Endothelial cell of umbilical vein (primary cell): ENCODE measurements at regions of chr15 and their contacts with region 1.

Region 1: GRCh38 chr15:79853458-79854328 is 43.1 kb downstream of the MTHFS start:
- DNase-seq: peak; percentile 88
- H3K4me3 ChIP-seq: no peak overlapping the region
- H3K27ac ChIP-seq: no peak overlapping the region
- H3K4me1 ChIP-seq: no peaks in the 10 kb centered on the region
- H3K27me3 ChIP-seq: no peaks in the 10 kb centered on the region
- CTCF ChIP-seq: peak; percentile 93 to 95
- POLR2A ChIP-seq: no peak

Region 2: GRCh38 chr15:79310983-79311900 is 542.5 kb before region 1 on chr15 and contains the start of gene TMED3:
- CTCF ChIA-PET with region 1: interaction called, 11 read pairs
- POLR2A ChIA-PET with region 1: no interaction called
- dilution Hi-C with region 1: no loop called
- intact Hi-C with region 1: no loop called
- DNase-seq: peak; percentile 85
- H3K4me3 ChIP-seq: peak within 1 kb of the TSS; percentile 61 to 74 (median 65)
- H3K27ac ChIP-seq: peak within 1 kb of the TSS; percentile 22
- H3K4me1 ChIP-seq: peaks cover 16% of the 10 kb centered on the region
- H3K27me3 ChIP-seq: peaks cover 13 to 28% of the 10 kb centered on the region in 2 experiments
- CTCF ChIP-seq: peak; percentile 18 to 35
- POLR2A ChIP-seq: peak; percentile 77
- total RNA-seq, gene TMED3: 105 and 114 TPM in 2 replicates

Region 3: GRCh38 chr15:79380755-79381497 is 472.8 kb before region 1 on chr15:
- CTCF ChIA-PET with region 1: interaction called, 535 read pairs
- POLR2A ChIA-PET with region 1: no interaction called
- dilution Hi-C with region 1: no loop called
- intact Hi-C with region 1: loop called (anchors 1 kb)
- DNase-seq: peak; percentile 77
- H3K4me3 ChIP-seq: no peak overlapping the region
- H3K27ac ChIP-seq: no peak overlapping the region
- H3K4me1 ChIP-seq: no peaks in the 10 kb centered on the region
- H3K27me3 ChIP-seq: no peaks in the 10 kb centered on the region
- CTCF ChIP-seq: peak; percentile 81 to 87
- POLR2A ChIP-seq: no peak

Region 4: GRCh38 chr15:79450648-79451047 is 403.0 kb before region 1 on chr15:
- CTCF ChIA-PET with region 1: interaction called, 18 read pairs
- POLR2A ChIA-PET with region 1: no interaction called
- dilution Hi-C with region 1: no loop called
- intact Hi-C with region 1: no loop called
- DNase-seq: no peak
- H3K4me3 ChIP-seq: no peak overlapping the region
- H3K27ac ChIP-seq: no peak overlapping the region
- H3K4me1 ChIP-seq: no peaks in the 10 kb centered on the region
- H3K27me3 ChIP-seq: peaks cover 0 to 2% of the 10 kb centered on the region in 2 experiments
- CTCF ChIP-seq: no peak
- POLR2A ChIP-seq: no peak

Region 5: DNA sequence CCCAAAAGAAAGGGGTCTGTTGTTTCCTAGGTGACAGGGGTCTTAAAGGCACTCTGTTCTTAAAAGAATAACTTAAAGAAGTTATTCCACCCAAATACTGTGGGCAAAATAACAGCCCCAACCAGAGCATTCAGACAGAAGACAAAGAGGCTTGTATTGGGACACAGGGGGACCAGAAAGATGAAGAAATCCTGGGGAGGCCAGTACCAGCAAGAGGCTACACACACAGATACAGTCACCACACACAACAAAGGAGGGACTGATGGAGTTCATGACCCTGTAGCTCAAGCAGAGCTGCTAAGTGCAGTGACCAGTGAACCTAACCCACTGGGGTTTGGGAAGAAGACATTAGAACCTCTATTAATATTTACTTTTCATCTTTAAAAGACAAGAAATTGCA is 15.8 kb before region 1 on chr15:
- CTCF ChIA-PET with region 1: interaction called, 16 read pairs
- POLR2A ChIA-PET with region 1: no interaction called
- dilution Hi-C with region 1: no loop called
- intact Hi-C with region 1: no loop called
- DNase-seq: no peak
- H3K4me3 ChIP-seq: no peak overlapping the region
- H3K27ac ChIP-seq: no peak overlapping the region
- H3K4me1 ChIP-seq: no peaks in the 10 kb centered on the region
- H3K27me3 ChIP-seq: no peaks in the 10 kb centered on the region
- CTCF ChIP-seq: no peak
- POLR2A ChIP-seq: no peak

Region 6: GRCh38 chr15:79896637-79897379 is 43.1 kb after region 1 on chr15 and contains the start of gene MTHFS:
- CTCF ChIA-PET with region 1: interaction called, 9 read pairs
- POLR2A ChIA-PET with region 1: no interaction called
- dilution Hi-C with region 1: no loop called
- intact Hi-C with region 1: loop called (anchors 2 kb)
- DNase-seq: peak; percentile 73
- H3K4me3 ChIP-seq: peak within 1 kb of the TSS in 2 of 3 experiments; percentile 53 to 77
- H3K27ac ChIP-seq: peak within 1 kb of the TSS; percentile 46
- H3K4me1 ChIP-seq: peaks cover 8% of the 10 kb centered on the region
- H3K27me3 ChIP-seq: no peaks in the 10 kb centered on the region
- CTCF ChIP-seq: peak; percentile 42 to 65
- POLR2A ChIP-seq: peak; percentile 66
- total RNA-seq, gene MTHFS: 9.9 and 15.7 TPM in 2 replicates

Region 7: GRCh38 chr15:80173022-80173759 is 319.5 kb after region 1 on chr15:
- CTCF ChIA-PET with region 1: interaction called, 10 read pairs
- POLR2A ChIA-PET with region 1: no interaction called
- dilution Hi-C with region 1: no loop called
- intact Hi-C with region 1: loop called (anchors 2 kb)
- DNase-seq: peak; percentile 58
- H3K4me3 ChIP-seq: no peak overlapping the region
- H3K27ac ChIP-seq: no peak overlapping the region
- H3K4me1 ChIP-seq: peaks cover 3% of the 10 kb centered on the region
- H3K27me3 ChIP-seq: no peaks in the 10 kb centered on the region
- CTCF ChIP-seq: peak; percentile 75 to 82
- POLR2A ChIP-seq: no peak